ENCODE measurements at regions of chr16 and their contacts with region 1.

Region 1: DNA sequence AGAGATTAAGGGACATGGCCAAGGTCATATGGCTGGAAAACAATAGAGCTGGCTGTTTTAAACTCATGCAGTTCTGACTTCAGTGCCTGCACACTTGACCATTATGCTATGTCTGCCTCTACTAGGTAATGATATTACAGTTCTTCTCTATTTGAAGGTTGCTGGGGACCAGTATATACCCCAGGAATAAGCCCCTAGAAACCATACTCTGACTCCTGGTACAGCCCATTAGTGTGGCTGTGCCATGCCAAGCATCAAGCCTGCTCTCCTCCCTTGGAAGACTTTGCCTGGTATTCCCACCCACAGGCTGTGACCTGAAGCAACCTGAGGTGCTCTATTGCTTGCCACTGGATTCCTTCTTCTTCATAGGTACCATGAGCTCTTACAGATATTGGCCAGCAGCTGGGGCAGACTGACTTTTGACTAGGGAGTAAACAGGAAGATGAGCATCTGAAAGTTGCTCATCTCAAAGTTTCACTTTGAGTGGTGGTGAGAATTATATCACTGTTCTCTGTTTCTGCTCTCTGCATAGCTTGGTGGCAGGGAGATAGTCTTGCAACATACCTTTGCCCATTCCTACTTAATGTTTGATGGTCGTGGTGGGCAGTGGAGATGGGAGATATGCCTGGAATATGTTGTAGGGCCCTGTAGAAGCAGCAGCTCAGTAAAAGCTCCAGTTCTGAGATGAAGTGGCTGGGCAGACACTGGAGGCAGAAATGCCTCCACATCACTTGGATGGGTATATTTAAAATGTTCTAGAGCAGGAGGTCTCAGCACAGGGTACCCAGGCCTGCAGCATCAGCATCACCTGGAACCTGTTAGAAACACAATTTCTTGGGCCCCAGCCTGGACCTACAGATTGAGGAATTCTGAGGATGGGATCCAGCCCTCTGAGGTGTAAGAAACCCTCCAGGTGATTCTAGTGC is 274.7 kb downstream of the HS3ST4 start:
- DNase-seq: no peak
- ATAC-seq: no peak
- H3K4me3 ChIP-seq: no peak overlapping the region
- H3K4me3 Mint-ChIP-seq: no peak overlapping the region
- H3K27ac ChIP-seq: no peak overlapping the region
- H3K27ac Mint-ChIP-seq: no peak overlapping the region
- H3K4me1 ChIP-seq: no peaks in the 10 kb centered on the region
- H3K4me1 Mint-ChIP-seq: no peaks in the 10 kb centered on the region
- H3K27me3 ChIP-seq: no peaks in the 10 kb centered on the region
- H3K27me3 Mint-ChIP-seq: no peaks in the 10 kb centered on the region
- CTCF ChIP-seq: no peak

Region 2: GRCh38 chr16:26012376-26012775 is 45.9 kb after region 1 on chr16:
- CTCF ChIA-PET with region 1: no interaction called
- POLR2A ChIA-PET with region 1: no interaction called
- intact Hi-C with region 1: loop called in 1 of 2 experiments (anchors 2 kb)
- DNase-seq: no peak
- ATAC-seq: no peak
- H3K4me3 ChIP-seq: no peak overlapping the region
- H3K4me3 Mint-ChIP-seq: no peak overlapping the region
- H3K27ac ChIP-seq: no peak overlapping the region
- H3K27ac Mint-ChIP-seq: no peak overlapping the region
- H3K4me1 ChIP-seq: no peaks in the 10 kb centered on the region
- H3K4me1 Mint-ChIP-seq: no peaks in the 10 kb centered on the region
- H3K27me3 ChIP-seq: no peaks in the 10 kb centered on the region
- H3K27me3 Mint-ChIP-seq: no peaks in the 10 kb centered on the region
- CTCF ChIP-seq: no peak